PC-9 (cell line): ENCODE measurements at regions of chr7 and their contacts with region 1.

Region 1: DNA sequence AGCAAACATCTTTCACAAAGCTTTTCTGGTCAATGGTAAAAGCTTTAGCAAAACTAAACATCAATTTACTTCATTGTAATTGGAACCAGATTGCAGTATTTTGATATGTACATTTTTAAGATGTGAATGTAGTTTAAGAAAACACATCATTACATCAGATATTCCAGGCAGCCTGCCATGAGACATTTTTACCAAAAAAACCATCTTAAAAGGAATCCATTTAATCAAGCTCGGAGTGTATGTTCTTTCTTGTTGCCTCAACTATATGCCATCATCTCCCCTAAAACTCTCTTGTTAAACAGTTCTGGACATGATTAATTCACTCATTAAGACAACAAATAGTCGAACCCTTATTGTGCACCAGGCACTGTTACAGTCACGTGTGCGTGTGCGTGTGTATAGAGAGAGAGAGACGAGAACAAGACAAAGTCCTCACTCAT is 97.5 kb downstream of the UBE2H start:
- DNase-seq: no peak
- H3K4me3 ChIP-seq: no peak overlapping the region
- H3K27ac ChIP-seq: peak overlapping the region; percentile 84
- H3K4me1 ChIP-seq: peaks cover 84% of the 10 kb centered on the region
- H3K27me3 ChIP-seq: no peaks in the 10 kb centered on the region
- CTCF ChIP-seq: no peak

Region 2: GRCh38 chr7:129865093-129865933 is 10.1 kb after region 1 on chr7:
- CTCF ChIA-PET with region 1: no interaction called
- POLR2A ChIA-PET with region 1: interaction called, 12 read pairs
- intact Hi-C with region 1: no loop called
- DNase-seq: peak; percentile 11 to 80
- H3K4me3 ChIP-seq: 0 out of 2 replicates have a peak overlapping the region, but pooled peaks have one; percentile 16
- H3K27ac ChIP-seq: peak overlapping the region; percentile 96
- H3K4me1 ChIP-seq: peaks cover 58% of the 10 kb centered on the region
- H3K27me3 ChIP-seq: no peaks in the 10 kb centered on the region
- CTCF ChIP-seq: no peak